Gastrocnemius medialis (tissue), 4 donors: ENCODE measurements at regions of chr6 and their contacts with region 1.

Region 1: GRCh38 chr6:85810558-85810957 is 167.9 kb upstream of the SYNCRIP start:
- DNase-seq: no peak
- ATAC-seq: no peak
- H3K4me3 ChIP-seq: no peak overlapping the region
- H3K27ac ChIP-seq: no peak overlapping the region
- H3K4me1 ChIP-seq: no peaks in the 10 kb centered on the region
- H3K27me3 ChIP-seq: no peaks in the 10 kb centered on the region
- CTCF ChIP-seq: no peak
- POLR2A ChIP-seq: no peak

Region 2: DNA sequence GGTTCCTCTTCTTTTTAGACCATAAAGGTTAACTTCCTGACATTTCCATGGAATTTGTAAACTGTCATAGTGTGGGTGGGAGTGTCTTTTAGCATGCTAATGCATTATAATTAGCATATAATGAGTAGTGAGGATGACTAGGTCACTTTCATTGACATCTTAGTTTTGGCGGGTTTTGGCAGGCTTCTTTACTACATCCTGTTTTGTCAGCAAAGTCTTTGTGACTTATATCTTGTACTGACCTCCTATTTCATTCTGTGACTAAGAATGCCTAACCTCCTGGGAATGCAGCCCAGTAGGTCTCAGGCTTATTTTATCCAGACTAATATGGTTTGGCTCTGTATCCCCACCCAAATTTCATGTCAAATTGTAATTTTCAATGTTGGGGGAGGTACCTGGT is 18.3 kb before region 1 on chr6:
- in situ Hi-C with region 1: no loop called
- intact Hi-C with region 1: no loop called
- DNase-seq: no peak
- ATAC-seq: no peak
- H3K4me3 ChIP-seq: no peak overlapping the region
- H3K27ac ChIP-seq: no peak overlapping the region
- H3K4me1 ChIP-seq: no peaks in the 10 kb centered on the region
- H3K27me3 ChIP-seq: no peaks in the 10 kb centered on the region
- CTCF ChIP-seq: no peak
- POLR2A ChIP-seq: no peak

Region 3: DNA sequence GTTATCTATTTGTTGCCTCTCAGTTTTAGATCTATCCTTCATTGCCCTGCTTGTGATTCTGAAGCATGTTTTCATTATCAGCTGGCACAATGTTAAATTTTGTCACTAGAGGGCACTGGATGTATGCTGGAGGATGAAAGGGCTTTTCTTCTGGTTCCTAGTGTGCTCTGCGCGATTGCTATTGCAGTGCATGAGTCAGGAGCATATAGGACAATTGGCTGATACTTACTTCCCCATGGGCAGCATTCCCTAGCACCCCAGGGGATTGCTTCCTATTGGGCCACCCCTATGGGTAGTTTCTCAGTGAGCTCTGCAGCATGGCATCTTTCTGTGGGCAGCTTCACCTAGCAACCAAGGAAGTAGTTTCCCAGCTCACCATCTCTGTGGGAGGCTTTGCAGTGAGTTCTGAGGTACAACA is 112.5 kb after region 1 on chr6:
- in situ Hi-C with region 1: loop called in 1 of 4 experiments (anchors 25 kb)
- intact Hi-C with region 1: no loop called
- DNase-seq: no peak
- ATAC-seq: peak; percentile 49 to 65
- H3K4me3 ChIP-seq: no peak overlapping the region
- H3K27ac ChIP-seq: no peak overlapping the region
- H3K4me1 ChIP-seq: no peaks in the 10 kb centered on the region
- H3K27me3 ChIP-seq: no peaks in the 10 kb centered on the region
- CTCF ChIP-seq: peak in 3 of 5 experiments; percentile 28 to 51 (median 46)
- POLR2A ChIP-seq: no peak

Region 4: DNA sequence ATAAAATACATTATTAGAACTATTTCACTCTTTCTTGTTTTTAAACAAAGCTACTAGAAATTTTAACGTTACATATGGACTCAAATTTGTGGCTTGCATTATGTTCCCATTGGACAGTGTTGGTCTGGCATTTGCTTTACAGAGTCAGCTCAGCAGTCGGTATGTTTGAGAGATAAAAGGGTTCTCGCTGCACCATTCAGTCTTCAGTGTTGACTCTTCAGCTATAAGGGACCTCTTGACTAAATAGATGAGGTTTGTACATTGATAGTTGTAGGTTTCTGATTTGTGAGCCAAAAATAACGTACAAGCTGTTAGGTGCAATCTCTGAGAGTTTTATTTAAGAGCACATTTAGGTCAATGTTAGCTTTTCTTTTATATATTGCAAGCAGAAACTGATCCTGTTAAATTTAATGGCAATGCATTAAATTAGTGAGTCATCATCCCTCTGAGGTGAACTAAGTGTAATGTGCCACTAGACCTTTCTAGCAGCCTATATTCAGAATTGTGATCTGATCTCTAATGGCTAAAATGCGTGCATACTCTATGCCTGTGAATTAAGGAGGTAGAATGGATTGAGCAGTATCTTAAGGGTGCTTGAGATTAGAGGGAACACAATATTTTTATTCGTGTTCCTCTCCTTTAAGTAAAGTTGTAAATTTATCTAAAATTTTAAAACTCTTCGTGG is 317.7 kb after region 1 on chr6:
- in situ Hi-C with region 1: no loop called
- intact Hi-C with region 1: no loop called
- DNase-seq: no peak
- ATAC-seq: no peak
- H3K4me3 ChIP-seq: no peak overlapping the region
- H3K27ac ChIP-seq: no peak overlapping the region
- H3K4me1 ChIP-seq: no peaks in the 10 kb centered on the region
- H3K27me3 ChIP-seq: no peaks in the 10 kb centered on the region
- CTCF ChIP-seq: no peak
- POLR2A ChIP-seq: no peak